CD4-positive, alpha-beta memory T cell (primary cell): ENCODE measurements at regions of chr19 and their contacts with region 1.

Region 1: DNA sequence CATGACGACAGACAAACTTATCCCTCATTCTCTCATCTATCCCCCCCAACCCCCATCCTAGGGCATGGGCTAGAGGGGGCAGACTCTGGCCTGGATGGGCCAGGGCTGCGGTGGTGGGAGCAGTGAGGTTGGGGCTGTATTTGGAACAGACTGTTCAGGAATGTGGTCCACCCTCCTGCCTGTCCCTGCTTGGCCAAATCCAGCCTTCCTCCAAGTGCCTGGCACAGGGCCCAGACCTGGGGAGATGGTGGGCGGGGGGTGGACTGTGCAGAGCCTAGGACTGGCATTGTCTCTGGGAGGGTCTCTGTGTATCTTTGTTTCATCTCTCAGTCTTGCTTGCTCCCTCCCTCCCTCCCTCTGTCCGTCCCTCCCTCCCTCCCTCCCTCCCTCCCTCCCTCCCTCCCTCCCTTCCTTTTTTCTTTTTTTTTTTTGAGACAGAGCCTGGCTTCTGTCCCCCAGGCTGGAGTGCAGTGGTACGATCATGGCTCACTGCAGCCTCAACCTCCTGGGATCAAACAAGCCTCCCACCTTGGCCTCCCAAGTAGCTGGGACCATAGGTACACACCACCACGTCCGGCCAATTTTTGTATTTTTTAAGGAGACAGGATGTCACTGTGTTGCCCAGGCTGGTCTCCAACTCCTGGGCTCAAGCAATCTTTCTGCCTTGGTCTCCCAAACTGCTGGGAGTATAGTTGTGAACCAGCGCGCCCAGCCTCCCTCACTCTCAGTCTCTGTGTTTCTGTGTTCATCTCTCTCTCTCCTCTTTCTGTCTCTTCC is 14.4 kb downstream of the EGLN2 start:
- DNase-seq: no peak
- H3K4me3 ChIP-seq: no peak overlapping the region
- H3K4me3 Mint-ChIP-seq: peak overlapping the region in 4 of 8 donors; percentile 41 to 97 (median 78)
- H3K27ac ChIP-seq: no peak overlapping the region
- H3K27ac Mint-ChIP-seq: peak overlapping the region; percentile 8 to 86 (median 49)
- H3K4me1 ChIP-seq: peaks cover 49% of the 10 kb centered on the region
- H3K4me1 Mint-ChIP-seq: peaks cover 18 to 58% (median 33%) of the 10 kb centered on the region in 4 donors
- H3K27me3 ChIP-seq: no peaks in the 10 kb centered on the region
- H3K27me3 Mint-ChIP-seq: no peaks in the 10 kb centered on the region

Region 2: GRCh38 chr19:40921005-40921897 is 107.9 kb after region 1 on chr19:
- CTCF ChIA-PET with region 1: no interaction called
- POLR2A ChIA-PET with region 1: no interaction called
- intact Hi-C with region 1: no loop called
- DNase-seq: no peak
- H3K4me3 ChIP-seq: no peak overlapping the region
- H3K4me3 Mint-ChIP-seq: no peak overlapping the region
- H3K27ac ChIP-seq: no peak overlapping the region
- H3K27ac Mint-ChIP-seq: no peak overlapping the region
- H3K4me1 ChIP-seq: no peaks in the 10 kb centered on the region
- H3K4me1 Mint-ChIP-seq: no peaks in the 10 kb centered on the region
- H3K27me3 ChIP-seq: no peaks in the 10 kb centered on the region
- H3K27me3 Mint-ChIP-seq: peaks cover 6% of the 10 kb centered on the region in 2 donors

Region 3: GRCh38 chr19:41133260-41133659 is 319.9 kb after region 1 on chr19:
- CTCF ChIA-PET with region 1: no interaction called
- POLR2A ChIA-PET with region 1: no interaction called
- intact Hi-C with region 1: loop called (anchors 2 kb)
- DNase-seq: no peak
- H3K4me3 ChIP-seq: no peak overlapping the region
- H3K4me3 Mint-ChIP-seq: peak overlapping the region in 4 of 8 donors; percentile 32 to 87 (median 64)
- H3K27ac ChIP-seq: no peak overlapping the region
- H3K27ac Mint-ChIP-seq: peak overlapping the region in 2 of 7 donors; percentile 63 to 65
- H3K4me1 ChIP-seq: peaks cover 13% of the 10 kb centered on the region
- H3K4me1 Mint-ChIP-seq: peaks cover 5 to 33% (median 19%) of the 10 kb centered on the region in 4 donors
- H3K27me3 ChIP-seq: no peaks in the 10 kb centered on the region
- H3K27me3 Mint-ChIP-seq: peaks cover 0 to 1% of the 10 kb centered on the region in 2 donors

Region 4: GRCh38 chr19:41144403-41144802 is 331.0 kb after region 1 on chr19:
- CTCF ChIA-PET with region 1: no interaction called
- POLR2A ChIA-PET with region 1: no interaction called
- intact Hi-C with region 1: loop called (anchors 2 kb)
- DNase-seq: peak; percentile 85 to 88 (median 86)
- H3K4me3 ChIP-seq: no peak overlapping the region
- H3K4me3 Mint-ChIP-seq: no peak overlapping the region
- H3K27ac ChIP-seq: no peak overlapping the region
- H3K27ac Mint-ChIP-seq: peak overlapping the region in 5 of 7 donors; percentile 39 to 84 (median 81)
- H3K4me1 ChIP-seq: no peaks in the 10 kb centered on the region
- H3K4me1 Mint-ChIP-seq: peaks cover 0 to 2% (median under 1%) of the 10 kb centered on the region in 4 donors
- H3K27me3 ChIP-seq: no peaks in the 10 kb centered on the region
- H3K27me3 Mint-ChIP-seq: peaks cover 6 to 11% of the 10 kb centered on the region in 2 donors